ENCODE measurements at regions of chr7 and their contacts with region 1.

Region 1: GRCh38 chr7:18666107-18666728 is 170.7 kb downstream of the HDAC9 start:
- DNase-seq: peak; percentile 74 to 91 (median 84)
- H3K4me3 ChIP-seq: no peak overlapping the region
- H3K27ac ChIP-seq: no peak overlapping the region
- H3K4me1 ChIP-seq: no peaks in the 10 kb centered on the region
- H3K27me3 ChIP-seq: no peaks in the 10 kb centered on the region
- CTCF ChIP-seq: peak; percentile 68 to 94 (median 88)
- POLR2A ChIP-seq: no peak

Region 2: GRCh38 chr7:18352339-18353255 is 313.6 kb before region 1 on chr7:
- intact Hi-C with region 1: loop called in 1 of 2 experiments (anchors 10 kb)
- DNase-seq: peak; percentile 18 to 73 (median 51)
- H3K4me3 ChIP-seq: no peak overlapping the region
- H3K27ac ChIP-seq: no peak overlapping the region
- H3K4me1 ChIP-seq: peaks cover 0 to 6% of the 10 kb centered on the region in 2 donors
- H3K27me3 ChIP-seq: peaks cover 3% of the 10 kb centered on the region
- CTCF ChIP-seq: peak; percentile 30 to 61 (median 56)
- POLR2A ChIP-seq: no peak

Region 3: DNA sequence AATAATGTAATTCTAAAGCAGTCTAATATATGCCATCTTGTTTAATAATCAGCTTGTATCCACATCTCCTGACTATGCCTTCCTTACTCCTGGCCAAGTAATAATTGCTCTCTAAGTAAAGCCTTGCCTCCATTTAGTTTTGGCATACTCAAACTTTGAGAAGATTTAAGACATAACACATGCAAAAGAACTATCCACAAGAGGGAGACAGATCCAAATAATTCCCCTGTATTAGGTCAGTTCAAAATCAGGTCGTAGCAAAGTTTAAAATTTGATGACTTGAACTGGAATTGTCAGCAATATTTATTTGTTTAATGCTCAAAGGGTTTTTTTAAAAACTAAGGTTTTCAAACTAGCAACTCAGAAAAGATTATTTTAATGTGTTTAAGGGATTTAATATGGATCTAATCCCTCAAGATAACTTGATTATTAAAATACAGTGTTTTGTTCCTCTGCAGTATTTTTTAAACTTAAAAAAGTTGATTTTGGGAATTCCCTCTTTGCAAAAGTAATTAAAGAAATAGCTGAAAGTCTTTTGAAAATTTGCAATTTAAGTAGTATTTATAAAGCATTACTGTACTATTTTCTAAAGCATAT is 75.4 kb before region 1 on chr7:
- intact Hi-C with region 1: loop called (anchors 5 to 10 kb)
- DNase-seq: no peak
- H3K4me3 ChIP-seq: no peak overlapping the region
- H3K27ac ChIP-seq: no peak overlapping the region
- H3K4me1 ChIP-seq: no peaks in the 10 kb centered on the region
- H3K27me3 ChIP-seq: no peaks in the 10 kb centered on the region
- CTCF ChIP-seq: peak; percentile 49 to 80 (median 64)
- POLR2A ChIP-seq: no peak

Region 4: GRCh38 chr7:18597754-18598153 is 68.5 kb before region 1 on chr7:
- intact Hi-C with region 1: loop called (anchors 5 to 10 kb)
- DNase-seq: no peak
- H3K4me3 ChIP-seq: no peak overlapping the region
- H3K27ac ChIP-seq: no peak overlapping the region
- H3K4me1 ChIP-seq: no peaks in the 10 kb centered on the region
- H3K27me3 ChIP-seq: no peaks in the 10 kb centered on the region
- CTCF ChIP-seq: no peak
- POLR2A ChIP-seq: no peak

Region 5: DNA sequence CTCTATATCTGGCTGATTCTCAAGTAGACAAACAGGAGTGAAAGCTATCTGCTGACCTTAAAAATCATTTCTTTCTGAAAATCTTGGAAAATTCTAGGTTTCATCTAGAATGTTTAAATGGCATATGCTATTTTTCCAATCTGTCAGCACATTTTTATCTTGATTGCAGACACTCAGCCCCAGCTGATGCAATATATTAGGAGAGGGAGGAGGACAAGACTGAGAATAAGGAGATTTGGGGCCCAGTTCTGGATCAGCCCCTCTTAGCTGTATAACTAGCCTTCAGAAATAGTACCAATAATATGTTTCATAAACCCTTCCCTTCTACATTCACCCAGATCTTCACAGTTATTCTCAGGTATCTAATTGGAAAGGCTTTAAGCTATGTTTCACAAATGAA is 39.5 kb before region 1 on chr7:
- intact Hi-C with region 1: no loop called
- DNase-seq: no peak
- H3K4me3 ChIP-seq: no peak overlapping the region
- H3K27ac ChIP-seq: no peak overlapping the region
- H3K4me1 ChIP-seq: no peaks in the 10 kb centered on the region
- H3K27me3 ChIP-seq: no peaks in the 10 kb centered on the region
- CTCF ChIP-seq: no peak
- POLR2A ChIP-seq: no peak

Measured in adrenal gland (tissue), 19 donors.